HEK293 (cell line): ENCODE measurements at regions of chr13 and their contacts with region 1.

Region 1: DNA sequence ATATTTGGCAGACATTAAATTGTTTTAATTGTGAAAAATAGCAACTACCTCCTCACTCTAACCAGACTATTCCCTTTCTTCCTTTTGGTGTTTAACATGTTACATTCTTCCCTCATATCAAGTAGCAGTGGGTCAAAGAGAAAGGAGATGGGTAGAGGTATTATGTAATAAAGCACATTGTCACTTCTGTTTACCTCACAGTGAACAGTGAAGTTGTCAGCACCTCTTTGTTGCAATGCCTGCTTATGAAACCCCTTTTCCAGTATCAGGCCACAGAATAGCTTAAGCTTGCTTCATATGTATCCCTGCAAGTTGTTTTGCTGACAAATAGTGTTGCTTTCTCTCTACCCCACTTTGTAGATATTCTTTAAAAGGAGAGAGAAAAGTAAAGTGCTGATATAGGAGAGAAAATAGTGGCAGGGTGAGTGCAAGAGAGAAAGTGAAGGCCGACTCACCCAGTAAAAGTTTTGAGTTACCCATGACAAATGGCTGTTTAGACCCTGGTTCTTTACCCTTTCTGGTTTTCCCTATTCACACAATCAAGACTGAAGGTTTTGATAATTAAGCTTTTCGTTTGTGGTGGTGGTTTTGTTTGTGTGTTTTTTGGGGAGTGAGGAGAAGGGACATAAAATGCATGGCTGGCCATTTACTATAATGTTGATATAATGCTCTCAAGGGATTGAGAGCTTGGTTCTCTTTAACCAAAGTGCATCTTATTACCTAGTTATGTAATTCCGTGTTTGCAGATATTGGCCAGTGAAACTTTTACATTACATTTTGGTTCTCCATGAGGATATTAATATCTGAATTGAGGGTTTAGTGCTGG is 3.7 kb downstream of the ITM2B start:
- H3K4me3 ChIP-seq: no peak overlapping the region
- H3K27ac ChIP-seq: peak overlapping the region; percentile 8; the same call in 1 of the 2 replicates
- H3K4me1 ChIP-seq: peaks cover 10% of the 10 kb centered on the region
- CTCF ChIP-seq: no peak

Region 2: GRCh38 chr13:48595431-48596429 is 359.0 kb after region 1 on chr13:
- CTCF ChIA-PET with region 1: interaction called, 10 read pairs
- POLR2A ChIA-PET with region 1: no interaction called
- H3K4me3 ChIP-seq: no peak overlapping the region
- H3K27ac ChIP-seq: no peak overlapping the region
- H3K4me1 ChIP-seq: no peaks in the 10 kb centered on the region
- CTCF ChIP-seq: peak; percentile 72